ENCODE measurements at regions of chr15 and their contacts with region 1.

Region 1: DNA sequence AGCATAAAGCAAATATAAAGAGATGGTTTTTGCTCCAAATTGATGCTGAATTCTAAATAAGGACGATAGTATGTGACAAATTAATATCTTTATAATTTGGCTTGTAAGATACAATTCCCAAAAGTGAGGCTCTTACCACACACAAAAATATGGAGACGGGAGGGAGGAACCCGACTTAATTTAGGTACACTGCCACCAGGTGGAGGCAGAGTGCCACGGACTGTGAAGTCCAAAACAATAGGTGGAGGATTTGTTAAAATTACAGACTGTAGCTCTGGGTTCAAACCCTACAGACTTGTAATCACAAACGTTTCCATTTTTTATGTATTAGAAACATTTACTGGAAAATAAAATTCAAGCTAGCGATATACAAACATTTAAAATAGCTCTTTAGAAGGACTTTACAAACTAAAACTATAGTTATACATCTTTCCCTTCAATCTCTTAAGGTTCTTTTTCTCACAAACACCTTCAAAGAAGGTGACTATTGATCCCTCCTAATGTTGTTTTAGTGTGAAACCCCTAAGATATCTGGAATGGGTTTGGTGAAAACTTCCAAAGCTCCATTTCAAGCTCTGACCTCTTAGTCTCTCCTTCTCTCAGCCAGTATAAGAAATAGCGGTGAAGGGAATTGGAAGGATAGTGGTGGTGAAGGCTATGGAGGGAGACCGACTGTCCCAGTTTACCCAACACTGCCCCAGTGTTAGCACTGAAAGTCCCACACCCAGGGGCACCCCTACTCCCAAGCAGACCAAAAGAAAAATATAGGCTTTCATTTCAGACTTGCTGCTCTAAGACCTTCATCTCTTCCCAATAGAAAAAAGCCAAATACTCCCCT is 89.7 kb downstream of the AQP9 start:
- DNase-seq: peak; percentile 41 to 69 (median 61)
- ATAC-seq: peak; percentile 71
- H3K4me3 ChIP-seq: no peak overlapping the region
- H3K4me3 Mint-ChIP-seq: peak overlapping the region in 1 of 10 donors; percentile 40
- H3K27ac ChIP-seq: no peak overlapping the region
- H3K27ac Mint-ChIP-seq: no peak overlapping the region
- H3K4me1 ChIP-seq: no peaks in the 10 kb centered on the region
- H3K4me1 Mint-ChIP-seq: peaks cover 5 to 20% (median 17%) of the 10 kb centered on the region in 7 donors
- H3K27me3 ChIP-seq: no peaks in the 10 kb centered on the region
- H3K27me3 Mint-ChIP-seq: peaks cover 0 to 20% (median 9%) of the 10 kb centered on the region in 5 donors

Region 2: GRCh38 chr15:58410353-58410752 is 182.4 kb after region 1 on chr15:
- CTCF ChIA-PET with region 1: no interaction called
- POLR2A ChIA-PET with region 1: no interaction called
- intact Hi-C with region 1: loop called in 1 of 2 experiments (anchors 10 kb)
- DNase-seq: peak in 7 of 9 donors; percentile 30 to 59 (median 47)
- ATAC-seq: peak; percentile 69
- H3K4me3 ChIP-seq: peak overlapping the region; percentile 29
- H3K4me3 Mint-ChIP-seq: peak overlapping the region; percentile 77 to 96 (median 89)
- H3K27ac ChIP-seq: peak overlapping the region; percentile 57
- H3K27ac Mint-ChIP-seq: peak overlapping the region; percentile 53 to 95 (median 92)
- H3K4me1 ChIP-seq: no peaks in the 10 kb centered on the region
- H3K4me1 Mint-ChIP-seq: peaks cover 6 to 39% (median 30%) of the 10 kb centered on the region in 7 donors
- H3K27me3 ChIP-seq: no peaks in the 10 kb centered on the region
- H3K27me3 Mint-ChIP-seq: no peaks in the 10 kb centered on the region

Region 3: DNA sequence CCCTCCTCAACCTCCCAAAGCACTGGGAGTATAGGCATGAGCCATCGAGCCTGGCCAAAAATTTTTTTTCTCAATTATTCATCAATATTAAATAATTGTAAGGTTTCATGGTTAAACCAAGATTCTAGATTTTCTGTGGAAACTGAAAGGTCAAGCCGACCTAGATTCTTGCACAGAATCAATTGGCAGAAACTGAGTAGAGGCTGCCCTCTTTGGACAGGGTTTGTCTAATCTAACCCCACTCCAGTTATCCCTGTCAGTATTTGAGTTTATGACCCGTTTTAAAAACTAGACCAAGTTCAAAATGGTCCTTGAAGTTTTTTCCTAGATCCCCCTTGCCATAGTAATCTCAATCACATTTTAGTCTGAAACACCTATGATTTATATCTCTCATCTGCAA is 530.2 kb after region 1 on chr15:
- CTCF ChIA-PET with region 1: interaction called, 10 read pairs
- POLR2A ChIA-PET with region 1: no interaction called
- intact Hi-C with region 1: loop called (anchors 1 to 2 kb)
- DNase-seq: no peak
- ATAC-seq: no peak
- H3K4me3 ChIP-seq: no peak overlapping the region
- H3K4me3 Mint-ChIP-seq: no peak overlapping the region
- H3K27ac ChIP-seq: no peak overlapping the region
- H3K27ac Mint-ChIP-seq: no peak overlapping the region
- H3K4me1 ChIP-seq: no peaks in the 10 kb centered on the region
- H3K4me1 Mint-ChIP-seq: peaks cover 0 to 8% (median 0%) of the 10 kb centered on the region in 7 donors
- H3K27me3 ChIP-seq: no peaks in the 10 kb centered on the region
- H3K27me3 Mint-ChIP-seq: no peaks in the 10 kb centered on the region

Region 4: GRCh38 chr15:58909616-58910015 is 681.7 kb after region 1 on chr15:
- CTCF ChIA-PET with region 1: no interaction called
- POLR2A ChIA-PET with region 1: no interaction called
- intact Hi-C with region 1: loop called in 1 of 2 experiments (anchors 10 kb)
- DNase-seq: no peak
- ATAC-seq: no peak
- H3K4me3 ChIP-seq: no peak overlapping the region
- H3K4me3 Mint-ChIP-seq: peak overlapping the region in 6 of 10 donors; percentile 2 to 68 (median 42)
- H3K27ac ChIP-seq: no peak overlapping the region
- H3K27ac Mint-ChIP-seq: peak overlapping the region in 8 of 9 donors; percentile 46 to 74 (median 57)
- H3K4me1 ChIP-seq: peaks cover 7 to 17% of the 10 kb centered on the region in 2 donors
- H3K4me1 Mint-ChIP-seq: peaks cover 35 to 69% (median 60%) of the 10 kb centered on the region in 7 donors
- H3K27me3 ChIP-seq: no peaks in the 10 kb centered on the region
- H3K27me3 Mint-ChIP-seq: no peaks in the 10 kb centered on the region

Region 5: DNA sequence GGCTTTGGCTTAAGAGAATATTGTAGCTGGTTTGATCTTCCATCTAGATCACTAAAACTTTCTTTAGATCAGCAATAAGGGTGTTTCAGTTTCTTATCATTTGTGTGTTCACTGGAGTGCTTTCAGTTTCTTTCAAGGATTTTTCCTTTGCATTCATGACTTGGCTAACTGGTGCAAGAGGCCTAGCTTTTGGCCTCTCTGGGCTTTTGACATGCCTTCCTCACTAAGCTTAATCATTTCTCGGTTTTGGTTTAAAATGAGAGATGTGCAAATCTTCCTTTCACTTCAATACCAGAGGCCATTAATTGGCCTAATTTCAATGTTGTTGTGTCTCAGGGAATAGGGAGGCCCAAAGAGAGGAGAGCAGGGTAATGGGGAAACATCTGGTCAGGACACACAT is 846.7 kb after region 1 on chr15:
- CTCF ChIA-PET with region 1: no interaction called
- POLR2A ChIA-PET with region 1: no interaction called
- intact Hi-C with region 1: loop called in 1 of 2 experiments (anchors 10 kb)
- DNase-seq: no peak
- ATAC-seq: no peak
- H3K4me3 ChIP-seq: no peak overlapping the region
- H3K4me3 Mint-ChIP-seq: peak overlapping the region in 1 of 10 donors; percentile 6
- H3K27ac ChIP-seq: no peak overlapping the region
- H3K27ac Mint-ChIP-seq: peak overlapping the region in 7 of 9 donors; percentile 3 to 82 (median 36)
- H3K4me1 ChIP-seq: no peaks in the 10 kb centered on the region
- H3K4me1 Mint-ChIP-seq: peaks cover 0 to 15% (median 0%) of the 10 kb centered on the region in 7 donors
- H3K27me3 ChIP-seq: no peaks in the 10 kb centered on the region
- H3K27me3 Mint-ChIP-seq: no peaks in the 10 kb centered on the region

Region 6: GRCh38 chr15:59528965-59529402 is 1301.1 kb after region 1 on chr15:
- CTCF ChIA-PET with region 1: interaction called, 7 read pairs
- POLR2A ChIA-PET with region 1: no interaction called
- intact Hi-C with region 1: loop called (anchors 1 kb)
- DNase-seq: peak; percentile 44 to 74 (median 65)
- ATAC-seq: peak; percentile 89
- H3K4me3 ChIP-seq: no peak overlapping the region
- H3K4me3 Mint-ChIP-seq: no peak overlapping the region
- H3K27ac ChIP-seq: no peak overlapping the region
- H3K27ac Mint-ChIP-seq: peak overlapping the region in 5 of 9 donors; percentile 2 to 48 (median 22)
- H3K4me1 ChIP-seq: peaks cover 0 to 8% of the 10 kb centered on the region in 2 donors
- H3K4me1 Mint-ChIP-seq: peaks cover 14 to 28% (median 20%) of the 10 kb centered on the region in 7 donors
- H3K27me3 ChIP-seq: no peaks in the 10 kb centered on the region
- H3K27me3 Mint-ChIP-seq: peaks cover 0 to 15% (median 0%) of the 10 kb centered on the region in 5 donors